AG04450 (cell line): ENCODE measurements at regions of chr6 and their contacts with region 1.

Region 1: GRCh38 chr6:32127717-32128592 is at the start of gene ATF6B:
- DNase-seq: peak; percentile 99
- H3K4me3 ChIP-seq: peak within 1 kb of the TSS; percentile 98
- H3K27ac ChIP-seq: peak within 1 kb of the TSS; percentile 92
- H3K27me3 ChIP-seq: no peaks in the 10 kb centered on the region
- CTCF ChIP-seq: no peak
- polyA plus RNA-seq, gene ATF6B: 39.2 and 60.0 TPM in 2 replicates

Region 2: DNA sequence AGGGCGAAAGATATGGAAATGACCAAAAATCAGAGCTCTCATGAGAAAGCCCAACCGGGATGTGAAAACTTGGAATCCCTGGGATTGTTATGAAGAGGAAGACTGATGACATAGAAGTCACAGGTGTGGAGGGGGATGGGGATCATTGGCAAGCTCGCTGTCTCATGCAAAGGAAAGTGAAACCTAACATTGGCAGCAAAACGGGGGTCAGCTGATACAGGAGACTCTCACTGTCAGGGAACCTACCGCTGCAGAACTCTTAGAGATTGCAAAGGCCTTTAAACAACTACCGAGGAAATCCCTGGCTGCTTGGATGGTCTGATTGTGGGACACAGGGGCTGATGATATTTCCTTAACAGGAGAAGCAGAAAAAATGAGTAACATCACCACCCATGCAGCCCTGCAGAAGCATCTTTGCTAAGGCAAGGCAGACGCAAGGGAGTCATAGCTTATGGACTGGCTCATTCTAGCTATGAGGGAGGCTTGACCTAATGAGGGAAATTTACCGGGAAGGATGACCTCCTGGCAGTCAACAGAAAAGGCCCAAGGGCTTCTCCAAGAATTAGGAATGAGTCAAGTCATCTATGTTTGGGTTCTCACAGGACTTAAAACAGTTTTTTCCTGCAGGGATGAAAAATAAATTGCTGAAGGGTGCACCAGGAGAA is 1137.4 kb before region 1 on chr6:
- CTCF ChIA-PET with region 1: no interaction called
- POLR2A ChIA-PET with region 1: no interaction called
- DNase-seq: no peak
- H3K4me3 ChIP-seq: no peak overlapping the region
- H3K27ac ChIP-seq: no peak overlapping the region
- H3K27me3 ChIP-seq: peaks cover 9% of the 10 kb centered on the region
- CTCF ChIP-seq: no peak

Region 3: DNA sequence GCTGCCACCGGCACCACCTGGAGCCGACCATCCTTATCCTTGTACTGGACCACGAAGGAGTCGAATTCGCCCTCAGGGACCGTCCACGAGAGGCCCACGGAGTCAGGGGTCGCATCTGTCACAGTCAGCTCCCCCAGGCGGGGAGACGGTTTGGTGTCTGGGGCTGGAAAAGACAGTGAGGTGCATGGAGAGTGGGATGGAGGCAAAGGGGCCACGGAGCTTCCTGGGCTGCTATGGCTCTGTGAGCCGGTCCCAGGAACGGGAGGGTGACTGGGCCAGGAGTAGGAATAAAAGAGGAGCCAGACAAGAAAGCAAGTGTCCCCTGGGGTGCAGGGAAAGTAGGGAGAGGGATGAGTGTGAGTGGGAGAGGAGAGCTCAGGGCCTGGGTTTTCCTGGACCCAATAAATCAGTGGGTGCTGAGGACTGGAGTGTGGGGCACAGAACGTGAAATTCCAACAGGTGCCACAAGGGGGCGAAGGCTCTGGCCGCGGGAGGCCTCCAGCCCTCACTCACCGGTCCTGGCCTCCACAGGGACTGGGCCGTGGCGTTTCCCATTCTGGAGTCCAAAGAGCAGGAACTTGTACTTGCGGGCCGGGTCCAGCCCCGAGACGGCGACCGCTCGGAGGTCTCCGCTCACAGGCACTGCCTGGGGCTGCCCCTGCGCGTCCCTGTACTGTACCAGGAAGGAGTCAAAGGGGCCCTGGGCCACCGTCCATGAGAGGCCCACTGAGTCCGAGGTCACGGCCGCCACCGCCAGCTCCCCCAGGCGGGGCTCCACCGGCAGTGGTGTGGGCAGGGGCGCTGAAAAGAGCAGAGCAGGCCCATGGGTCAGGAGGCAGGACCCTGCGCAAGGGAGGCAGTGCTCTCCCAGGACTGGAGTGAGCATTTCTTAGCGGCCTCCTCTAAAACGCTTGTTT is 79.8 kb before region 1 on chr6:
- CTCF ChIA-PET with region 1: interaction called, 3 read pairs
- POLR2A ChIA-PET with region 1: interaction called, 12 read pairs
- DNase-seq: peak; percentile 7
- H3K4me3 ChIP-seq: no peak overlapping the region
- H3K27ac ChIP-seq: no peak overlapping the region
- H3K27me3 ChIP-seq: peaks cover 23% of the 10 kb centered on the region
- CTCF ChIP-seq: peak; percentile 75

Region 4: GRCh38 chr6:32113386-32114352 is 14.3 kb before region 1 on chr6:
- CTCF ChIA-PET with region 1: interaction called, 44 read pairs
- POLR2A ChIA-PET with region 1: interaction called, 8 read pairs
- DNase-seq: peak; percentile 81
- H3K4me3 ChIP-seq: no peak overlapping the region
- H3K27ac ChIP-seq: peak overlapping the region; percentile 39
- H3K27me3 ChIP-seq: peaks cover 12% of the 10 kb centered on the region
- CTCF ChIP-seq: peak; percentile 60